ENCODE measurements at regions of chr7 and their contacts with region 1.

Region 1: DNA sequence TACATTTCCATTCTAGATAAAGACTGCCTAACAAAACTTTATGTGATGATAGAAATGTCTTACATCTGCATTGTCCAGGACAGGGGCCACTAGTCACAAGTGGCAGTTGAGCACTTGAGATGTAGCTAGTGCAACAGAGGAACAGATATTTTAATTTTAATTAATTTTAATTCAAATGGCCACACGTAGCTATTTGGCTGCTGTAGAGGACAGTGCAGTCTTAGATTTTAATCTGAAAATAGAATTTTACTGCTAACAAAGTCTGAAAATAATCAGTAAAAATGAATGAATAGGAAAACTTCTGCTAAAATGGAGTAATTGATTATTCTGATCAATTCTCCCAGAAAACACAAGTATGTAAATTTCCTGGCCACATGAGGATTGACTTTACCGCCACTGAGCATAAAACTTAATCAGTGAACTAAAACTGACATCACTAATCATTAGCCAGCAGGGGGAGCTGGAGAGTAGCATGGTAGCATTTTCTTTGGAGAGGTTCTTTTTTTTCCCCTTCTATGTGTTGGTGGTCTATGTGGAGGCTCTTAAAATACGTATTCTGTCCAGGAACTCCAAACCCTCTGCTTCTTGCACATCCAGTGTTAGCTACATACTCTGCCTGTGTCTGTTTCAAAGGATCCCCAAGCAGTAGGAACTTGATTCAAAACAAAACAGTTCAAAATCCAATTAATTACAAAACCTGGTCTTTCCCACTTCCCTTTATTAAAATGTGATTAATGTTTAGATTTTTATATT is 52.1 kb downstream of the TSPAN12 start:
- DNase-seq: peak; percentile 28
- H3K4me3 ChIP-seq: no peak overlapping the region
- H3K27ac ChIP-seq: no peak overlapping the region
- H3K4me1 ChIP-seq: no peaks in the 10 kb centered on the region
- H3K27me3 ChIP-seq: peaks cover 3% of the 10 kb centered on the region
- CTCF ChIP-seq: peak; percentile 84 to 85

Region 2: GRCh38 chr7:120043250-120043649 is 762.6 kb before region 1 on chr7:
- CTCF ChIA-PET with region 1: no interaction called
- dilution Hi-C with region 1: no loop called
- in situ Hi-C with region 1: no loop called
- intact Hi-C with region 1: no loop called
- DNase-seq: no peak
- H3K4me3 ChIP-seq: no peak overlapping the region
- H3K27ac ChIP-seq: no peak overlapping the region
- H3K4me1 ChIP-seq: no peaks in the 10 kb centered on the region
- H3K27me3 ChIP-seq: no peaks in the 10 kb centered on the region
- CTCF ChIP-seq: no peak

Region 3: DNA sequence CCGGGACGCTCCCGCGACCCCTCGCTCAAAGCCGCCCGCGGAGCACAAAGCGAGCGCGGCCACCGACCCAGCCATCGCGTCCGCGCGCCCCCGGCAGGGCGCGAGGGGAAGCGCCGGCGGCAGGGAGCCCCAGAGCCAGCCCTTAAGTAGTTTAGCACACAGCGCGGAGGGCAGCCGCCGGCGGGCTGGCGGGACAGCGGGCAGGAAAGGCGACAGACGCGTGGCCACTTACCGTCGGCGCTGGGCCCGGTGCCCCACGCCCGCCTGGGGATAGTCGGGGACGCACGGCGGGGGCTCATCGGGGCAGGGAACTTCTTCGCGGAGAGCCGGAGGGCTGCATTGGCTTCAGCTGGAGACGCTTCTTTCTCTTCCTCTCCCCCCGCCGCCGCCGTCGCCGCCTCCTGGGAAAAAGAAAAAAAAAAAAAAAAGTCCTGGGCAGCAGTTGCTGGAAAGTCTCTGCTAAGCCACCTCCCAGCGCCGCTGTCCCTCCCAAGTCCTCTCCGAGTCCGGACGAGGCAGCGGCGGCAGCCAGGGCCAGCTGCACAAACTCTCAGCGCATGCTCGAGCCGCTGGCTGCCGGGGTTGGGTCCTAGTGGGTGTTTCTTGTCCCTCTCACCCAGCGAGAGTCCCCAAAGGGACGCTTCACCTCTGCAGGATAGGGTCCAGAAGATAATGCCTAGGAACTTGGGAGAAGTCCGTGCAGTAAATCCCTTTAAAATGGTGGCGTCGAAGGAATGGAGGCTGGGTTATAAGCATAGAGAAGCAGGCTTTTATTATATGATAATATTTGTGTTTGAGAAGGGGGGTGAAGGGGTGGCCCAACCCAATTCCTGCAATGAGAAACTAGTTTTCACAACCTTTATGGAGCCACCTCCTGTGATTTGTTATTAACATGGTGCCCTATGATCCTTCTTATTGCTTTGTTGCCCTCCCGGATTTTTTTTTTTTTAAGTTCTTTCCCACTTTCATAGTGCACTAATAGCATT is 52.1 kb after region 1 on chr7 and contains the start of gene TSPAN12:
- CTCF ChIA-PET with region 1: no interaction called
- dilution Hi-C with region 1: no loop called
- in situ Hi-C with region 1: no loop called
- intact Hi-C with region 1: loop called (anchors 2 kb)
- DNase-seq: peak; percentile 48
- H3K4me3 ChIP-seq: peak within 1 kb of the TSS; percentile 61 to 79 (median 69)
- H3K27ac ChIP-seq: no peak within 1 kb of the TSS
- H3K4me1 ChIP-seq: peaks cover 10% of the 10 kb centered on the region
- H3K27me3 ChIP-seq: peaks cover 4% of the 10 kb centered on the region
- CTCF ChIP-seq: peak; percentile 23 to 50
- total RNA-seq, gene TSPAN12: 1.2 to 3.2 TPM

Region 4: GRCh38 chr7:120933475-120933874 is 127.7 kb after region 1 on chr7:
- CTCF ChIA-PET with region 1: no interaction called
- dilution Hi-C with region 1: no loop called
- in situ Hi-C with region 1: loop called in 1 of 2 experiments (anchors 10 kb)
- intact Hi-C with region 1: no loop called
- DNase-seq: no peak
- H3K4me3 ChIP-seq: no peak overlapping the region
- H3K27ac ChIP-seq: no peak overlapping the region
- H3K4me1 ChIP-seq: no peaks in the 10 kb centered on the region
- H3K27me3 ChIP-seq: no peaks in the 10 kb centered on the region
- CTCF ChIP-seq: no peak

Region 5: GRCh38 chr7:120941064-120941463 is 135.3 kb after region 1 on chr7:
- CTCF ChIA-PET with region 1: no interaction called
- dilution Hi-C with region 1: no loop called
- in situ Hi-C with region 1: loop called in 1 of 2 experiments (anchors 10 kb)
- intact Hi-C with region 1: loop called (anchors 1 kb)
- DNase-seq: no peak
- H3K4me3 ChIP-seq: no peak overlapping the region
- H3K27ac ChIP-seq: no peak overlapping the region
- H3K4me1 ChIP-seq: no peaks in the 10 kb centered on the region
- H3K27me3 ChIP-seq: no peaks in the 10 kb centered on the region
- CTCF ChIP-seq: peak; percentile 18 to 20

Region 6: DNA sequence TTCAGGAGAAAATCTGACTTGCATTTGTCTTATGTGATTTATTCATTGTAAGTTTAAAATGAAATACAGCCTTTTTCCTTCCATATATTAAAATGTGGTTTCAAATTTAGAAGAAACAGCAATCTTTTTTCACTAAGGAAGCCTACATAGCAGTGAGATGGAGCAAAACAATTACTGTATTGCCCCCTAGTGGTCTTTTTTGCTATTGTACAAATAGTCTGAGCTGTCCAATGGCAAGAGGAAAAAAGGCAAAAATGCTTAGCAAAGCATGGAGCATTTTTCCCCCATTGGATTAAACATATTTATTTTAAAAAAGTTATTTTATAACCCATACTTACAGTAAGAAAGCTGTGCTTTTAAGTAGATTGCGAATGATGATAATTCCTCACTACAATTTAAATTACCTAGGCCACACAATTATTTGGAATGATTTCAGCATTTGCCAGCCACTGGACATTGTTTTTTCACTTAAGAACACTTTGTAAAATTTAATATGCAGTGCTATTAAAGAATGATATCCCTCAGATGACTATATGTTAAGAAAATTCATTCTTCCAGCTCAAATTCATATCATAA is 302.2 kb after region 1 on chr7:
- CTCF ChIA-PET with region 1: no interaction called
- dilution Hi-C with region 1: no loop called
- in situ Hi-C with region 1: loop called (anchors 25 kb)
- intact Hi-C with region 1: loop called (anchors 2 kb)
- DNase-seq: peak; percentile 50
- H3K4me3 ChIP-seq: no peak overlapping the region
- H3K27ac ChIP-seq: no peak overlapping the region
- H3K4me1 ChIP-seq: peaks cover 3% of the 10 kb centered on the region
- H3K27me3 ChIP-seq: no peaks in the 10 kb centered on the region
- CTCF ChIP-seq: peak; percentile 75 to 78

Region 7: DNA sequence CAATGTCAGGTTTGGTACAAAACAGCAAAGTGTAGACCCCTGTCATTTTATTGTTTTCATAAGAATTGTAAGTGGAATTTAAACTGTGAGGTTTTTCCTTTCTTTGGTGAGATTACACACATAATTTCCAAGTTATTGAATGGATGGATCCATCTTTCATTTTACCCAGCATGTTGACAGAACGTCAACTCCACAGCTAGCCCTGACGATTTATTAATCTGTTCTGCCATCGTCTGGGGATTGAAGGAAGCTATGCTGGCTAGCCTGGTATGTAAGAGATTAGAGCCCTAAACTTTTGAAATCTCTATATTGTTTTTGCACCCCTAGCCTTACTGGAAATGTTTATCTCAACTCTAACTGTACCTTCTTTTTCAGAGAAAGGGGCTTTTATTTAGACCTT is 531.6 kb after region 1 on chr7:
- CTCF ChIA-PET with region 1: no interaction called
- dilution Hi-C with region 1: no loop called
- in situ Hi-C with region 1: no loop called
- intact Hi-C with region 1: loop called (anchors 5 kb)
- DNase-seq: no peak
- H3K4me3 ChIP-seq: no peak overlapping the region
- H3K27ac ChIP-seq: no peak overlapping the region
- H3K4me1 ChIP-seq: no peaks in the 10 kb centered on the region
- H3K27me3 ChIP-seq: no peaks in the 10 kb centered on the region
- CTCF ChIP-seq: no peak